Heart left ventricle (tissue), 16 donors: ENCODE measurements at regions of chr17 and their contacts with region 1.

Region 1: GRCh38 chr17:34998205-34998604 is 17.9 kb downstream of the LIG3 start:
- DNase-seq: peak; percentile 56 to 83 (median 67)
- ATAC-seq: peak; percentile 72 to 89 (median 82)
- H3K4me3 ChIP-seq: no peak overlapping the region
- H3K27ac ChIP-seq: peak overlapping the region in 9 of 12 donors; percentile 29 to 78 (median 64)
- H3K4me1 ChIP-seq: peaks cover 0 to 38% (median 7%) of the 10 kb centered on the region in 12 donors
- H3K27me3 ChIP-seq: no peaks in the 10 kb centered on the region
- CTCF ChIP-seq: peak; percentile 56 to 73 (median 63)
- POLR2A ChIP-seq: no peak

Region 2: DNA sequence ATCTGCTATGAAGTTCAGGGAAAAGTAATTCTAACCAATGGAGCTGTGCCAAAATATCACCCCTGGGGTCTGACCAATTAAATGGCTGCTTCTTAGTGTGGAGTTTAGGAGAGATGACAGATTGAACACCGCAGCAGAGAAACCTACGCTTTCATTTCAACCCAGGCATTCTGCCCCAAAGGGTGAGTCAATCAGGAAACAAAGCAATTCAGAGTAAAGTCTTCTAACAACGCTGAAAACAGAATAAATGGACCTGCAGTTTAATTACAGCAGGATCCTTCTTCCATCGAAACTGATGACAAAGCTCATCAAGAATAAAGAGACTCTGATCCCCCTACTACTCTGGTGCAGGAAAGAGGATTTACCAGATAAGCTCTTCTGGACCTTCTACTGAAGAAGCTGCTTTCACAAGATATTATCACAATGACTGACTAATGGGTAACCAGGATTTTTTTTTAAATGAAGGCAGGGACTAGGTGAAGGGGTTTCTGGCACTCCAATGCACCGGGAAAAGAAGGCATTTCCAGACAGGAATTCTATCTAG is 48.6 kb after region 1 on chr17:
- intact Hi-C with region 1: loop called in 1 of 10 experiments (anchors 10 kb)
- DNase-seq: no peak
- ATAC-seq: no peak
- H3K4me3 ChIP-seq: peak overlapping the region in 1 of 12 donors; percentile 15
- H3K27ac ChIP-seq: peak overlapping the region in 1 of 12 donors; percentile 67
- H3K4me1 ChIP-seq: peaks cover 0 to 51% (median 10%) of the 10 kb centered on the region in 12 donors
- H3K27me3 ChIP-seq: no peaks in the 10 kb centered on the region
- CTCF ChIP-seq: no peak
- POLR2A ChIP-seq: no peak

Region 3: DNA sequence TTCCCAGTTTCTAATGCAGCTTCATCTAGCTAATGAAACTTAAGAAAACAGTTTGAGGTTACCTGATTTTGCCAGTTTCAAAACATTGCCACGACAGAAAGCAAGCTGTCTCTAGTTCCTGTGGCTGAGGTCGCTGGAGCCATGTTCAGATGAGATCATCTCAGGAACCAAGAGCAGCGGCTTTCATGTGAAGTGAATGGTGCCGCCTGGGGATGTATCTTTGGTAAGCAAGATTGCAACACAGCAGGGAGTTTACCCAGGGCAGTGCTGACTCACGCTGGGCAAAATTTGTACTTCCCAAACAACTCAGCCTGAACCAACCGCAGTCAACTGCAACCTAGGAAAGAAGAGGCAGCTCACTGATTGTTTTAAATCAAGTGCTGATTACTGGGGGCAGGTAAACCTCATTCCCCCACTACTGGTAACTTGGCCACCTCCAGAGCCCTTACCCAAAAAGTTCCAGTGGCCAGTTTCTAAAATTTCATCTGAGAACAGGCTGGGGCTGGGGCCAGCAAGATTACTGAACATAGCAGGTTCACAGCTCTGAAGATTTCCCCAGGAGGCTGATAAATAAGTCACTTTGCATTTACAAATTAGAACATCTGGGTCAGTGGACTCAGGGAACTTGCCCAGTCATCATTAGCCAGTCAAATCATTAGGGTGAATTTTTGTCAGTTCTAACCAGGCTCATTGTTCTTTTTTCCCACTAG is 65.5 kb after region 1 on chr17 and contains the start of gene RFFL:
- intact Hi-C with region 1: loop called in 2 of 10 experiments (anchors 5 to 10 kb)
- DNase-seq: peak; percentile 76 to 89 (median 83)
- ATAC-seq: peak; percentile 97 to 100 (median 99)
- H3K4me3 ChIP-seq: peak within 1 kb of the TSS in 9 of 12 donors; percentile 26 to 44 (median 34)
- H3K27ac ChIP-seq: peak within 1 kb of the TSS; percentile 37 to 94 (median 79)
- H3K4me1 ChIP-seq: peaks cover 0 to 34% (median 10%) of the 10 kb centered on the region in 12 donors
- H3K27me3 ChIP-seq: no peaks in the 10 kb centered on the region
- CTCF ChIP-seq: peak in 7 of 12 donors; percentile 17 to 48 (median 26)
- POLR2A ChIP-seq: peak in 1 of 2 donors; percentile 43
- total RNA-seq, gene RFFL: 10.1 to 21.6 (median 13.5) TPM

Region 4: GRCh38 chr17:35119368-35120165 is 121.4 kb after region 1 on chr17 and contains the start of gene RAD51D:
- intact Hi-C with region 1: loop called in 8 of 10 experiments (anchors 1 to 5 kb)
- DNase-seq: peak; percentile 67 to 88 (median 73)
- ATAC-seq: peak; percentile 62 to 98 (median 95)
- H3K4me3 ChIP-seq: peak within 1 kb of the TSS; percentile 51 to 99 (median 90)
- H3K27ac ChIP-seq: peak within 1 kb of the TSS in 11 of 12 donors; percentile 8 to 86 (median 75)
- H3K4me1 ChIP-seq: peaks cover 0 to 20% (median 10%) of the 10 kb centered on the region in 12 donors
- H3K27me3 ChIP-seq: no peaks in the 10 kb centered on the region
- CTCF ChIP-seq: peak; percentile 67 to 98 (median 94)
- POLR2A ChIP-seq: peak in 1 of 2 donors; percentile 39
- total RNA-seq, gene RAD51D: 2.7 to 9.2 (median 5.0) TPM